ENCODE measurements at regions of chr4 and their contacts with region 1.

Region 1: GRCh38 chr4:153296040-153296823 is 48.3 kb upstream of the MND1 start:
- DNase-seq: no peak
- ATAC-seq: no peak
- H3K4me3 ChIP-seq: no peak overlapping the region
- H3K27ac ChIP-seq: no peak overlapping the region
- H3K4me1 ChIP-seq: no peaks in the 10 kb centered on the region
- H3K27me3 ChIP-seq: no peaks in the 10 kb centered on the region
- CTCF ChIP-seq: no peak
- POLR2A ChIP-seq: no peak

Region 2: GRCh38 chr4:153137159-153137558 is 159.1 kb before region 1 on chr4:
- intact Hi-C with region 1: loop called in 1 of 2 experiments (anchors 10 kb)
- DNase-seq: peak in 1 of 3 donors; percentile 21
- ATAC-seq: no peak
- H3K4me3 ChIP-seq: no peak overlapping the region
- H3K27ac ChIP-seq: no peak overlapping the region
- H3K4me1 ChIP-seq: no peaks in the 10 kb centered on the region
- H3K27me3 ChIP-seq: no peaks in the 10 kb centered on the region
- CTCF ChIP-seq: no peak
- POLR2A ChIP-seq: no peak